ENCODE measurements at regions of chr5 and their contacts with region 1.

Region 1: DNA sequence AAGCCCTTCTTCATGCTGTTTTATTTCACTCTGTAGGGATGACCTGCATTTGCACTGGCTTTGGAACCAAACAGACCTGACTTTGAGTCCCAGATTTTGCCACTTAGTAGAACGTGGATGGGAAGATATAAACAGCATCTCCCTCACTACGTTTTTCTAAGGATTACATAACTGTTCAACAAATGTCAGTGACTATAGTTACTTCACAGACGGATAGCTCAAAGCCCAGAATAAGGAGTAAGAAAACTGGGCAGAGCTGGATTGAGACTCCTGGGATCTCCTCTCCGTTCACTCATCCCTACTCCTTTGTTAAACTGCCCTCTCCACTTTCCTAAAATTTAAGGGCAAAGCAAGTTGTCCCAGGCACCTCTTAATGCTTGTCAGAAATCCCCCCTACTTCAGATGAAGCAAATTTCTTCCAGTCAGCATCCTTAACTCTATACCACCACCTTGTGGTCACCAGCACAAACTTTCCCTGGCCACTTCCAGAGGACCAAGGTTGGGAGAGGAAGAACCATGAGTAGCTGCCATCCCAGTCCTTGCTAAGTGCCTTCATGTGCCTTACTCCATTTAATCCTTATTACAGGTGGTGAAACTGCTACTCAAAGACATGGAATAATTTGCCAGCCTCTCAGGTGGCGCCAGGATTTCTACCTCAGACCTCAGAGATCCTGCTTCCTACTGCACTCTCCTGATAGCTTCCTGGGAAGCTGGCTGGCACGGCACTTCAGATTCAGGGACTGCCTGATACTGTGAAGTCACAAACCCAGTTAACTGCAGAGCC is 38.4 kb downstream of the EGR1 start:
- DNase-seq: peak; percentile 39
- H3K4me3 ChIP-seq: no peak overlapping the region
- H3K27ac ChIP-seq: no peak overlapping the region
- H3K4me1 ChIP-seq: no peaks in the 10 kb centered on the region
- H3K27me3 ChIP-seq: no peaks in the 10 kb centered on the region
- CTCF ChIP-seq: peak; percentile 69

Region 2: DNA sequence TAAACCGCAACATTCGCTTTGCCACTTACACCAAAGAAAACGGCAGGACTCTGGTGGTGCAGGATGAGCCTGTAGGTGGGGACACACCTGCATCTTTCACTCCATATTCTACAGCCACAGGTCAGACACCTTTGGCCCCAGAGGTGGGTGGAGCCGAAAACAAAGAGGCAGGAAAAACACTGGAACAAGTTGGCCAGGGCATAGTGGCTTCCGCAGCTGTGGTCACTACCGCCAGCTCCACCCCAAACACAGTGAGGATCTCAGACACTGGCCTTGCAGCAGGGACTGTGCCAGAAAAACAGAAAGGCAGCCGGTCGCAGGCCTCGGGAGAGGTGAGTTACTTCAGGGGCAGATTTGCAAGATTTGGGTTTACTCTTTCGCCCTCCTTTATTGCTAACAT is 117.4 kb before region 1 on chr5:
- intact Hi-C with region 1: no loop called
- DNase-seq: no peak
- H3K4me3 ChIP-seq: no peak overlapping the region
- H3K27ac ChIP-seq: no peak overlapping the region
- H3K4me1 ChIP-seq: no peaks in the 10 kb centered on the region
- H3K27me3 ChIP-seq: no peaks in the 10 kb centered on the region
- CTCF ChIP-seq: no peak

Region 3: DNA sequence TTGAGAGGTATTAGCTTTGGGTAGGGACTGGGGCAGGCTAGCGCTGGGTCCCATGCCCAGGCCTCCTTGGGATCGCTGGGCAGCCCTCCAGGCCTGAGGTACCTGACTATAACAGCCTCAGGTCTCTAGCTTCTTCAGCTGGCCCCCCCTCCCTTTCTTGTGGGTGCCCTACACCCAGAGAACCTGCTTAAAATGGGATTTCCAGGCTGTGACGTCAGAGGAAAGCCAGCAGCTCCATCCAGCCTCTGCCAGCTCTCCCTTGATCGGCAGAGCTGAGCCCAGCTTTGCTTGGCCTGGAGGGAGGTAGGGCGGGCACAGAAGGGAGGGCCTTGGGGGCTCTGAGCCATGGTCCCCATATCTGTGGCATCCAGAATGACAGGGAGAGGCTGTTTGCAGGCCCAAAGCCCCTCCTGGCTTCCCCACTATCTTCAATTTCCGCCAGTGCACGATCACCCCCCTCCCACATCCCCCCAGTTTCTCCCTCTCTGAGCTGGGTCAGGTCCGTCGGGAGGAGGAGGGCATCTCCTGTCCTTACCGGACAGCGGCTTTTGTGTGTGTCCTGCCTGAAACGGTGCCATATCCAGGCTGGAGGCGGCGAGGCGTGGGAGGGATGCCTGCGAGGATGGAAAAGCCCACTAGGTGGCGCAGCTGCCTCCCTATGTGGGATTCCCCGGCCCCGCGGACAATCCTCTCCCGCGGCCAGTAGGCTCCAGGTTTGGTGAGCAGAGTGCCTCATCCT is 54.0 kb before region 1 on chr5:
- intact Hi-C with region 1: loop called (anchors 2 kb)
- DNase-seq: peak; percentile 90
- H3K4me3 ChIP-seq: no peak overlapping the region
- H3K27ac ChIP-seq: no peak overlapping the region
- H3K4me1 ChIP-seq: no peaks in the 10 kb centered on the region
- H3K27me3 ChIP-seq: no peaks in the 10 kb centered on the region
- CTCF ChIP-seq: peak; percentile 91

Region 4: DNA sequence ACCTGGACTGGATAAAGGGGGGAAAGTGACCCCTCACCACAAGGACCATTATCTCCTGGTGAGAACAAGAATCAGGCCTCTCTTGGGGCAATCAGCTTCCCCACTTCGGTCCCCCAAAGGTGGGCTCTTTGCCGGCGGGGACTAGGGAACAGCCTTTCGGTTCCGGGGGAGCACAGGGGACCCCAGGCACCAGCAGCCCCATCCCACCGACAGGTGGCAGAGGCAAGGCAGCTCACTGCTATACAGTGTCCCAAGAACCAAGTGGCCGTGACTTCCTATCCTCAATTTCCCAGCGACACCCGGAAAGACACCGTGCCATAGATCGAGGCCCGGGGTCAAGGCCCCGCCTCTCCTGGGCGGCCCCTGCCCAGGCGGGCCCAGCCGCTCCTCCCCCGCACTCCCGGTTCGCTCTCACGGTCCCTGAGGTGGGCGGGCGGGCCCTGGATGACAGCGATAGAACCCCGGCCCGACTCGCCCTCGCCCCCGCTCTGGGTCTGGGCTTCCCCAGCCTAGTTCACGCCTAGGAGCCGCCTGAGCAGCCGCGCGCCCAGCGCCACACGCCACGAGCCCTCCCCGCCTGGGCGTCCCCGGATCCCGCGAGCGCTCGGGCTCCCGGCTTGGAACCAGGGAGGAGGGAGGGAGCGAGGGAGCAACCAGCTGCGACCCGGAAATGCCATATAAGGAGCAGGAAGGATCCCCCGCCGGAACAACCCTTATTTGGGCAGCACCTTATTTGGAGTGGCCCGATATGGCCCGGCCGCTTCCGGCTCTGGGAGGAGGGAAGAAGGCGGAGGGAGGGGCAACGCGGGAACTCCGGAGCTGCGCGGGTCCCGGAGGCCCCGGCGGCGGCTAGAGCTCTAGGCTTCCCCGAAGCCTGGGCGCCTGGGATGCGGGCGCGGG is 39.0 kb before region 1 on chr5:
- intact Hi-C with region 1: loop called (anchors 5 kb)
- DNase-seq: peak; percentile 98
- H3K4me3 ChIP-seq: peak overlapping the region; percentile 81
- H3K27ac ChIP-seq: peak overlapping the region; percentile 90
- H3K4me1 ChIP-seq: peaks cover 3% of the 10 kb centered on the region
- H3K27me3 ChIP-seq: no peaks in the 10 kb centered on the region
- CTCF ChIP-seq: no peak

Measured in colonic mucosa (tissue), 4 donors.